K562 (cell line): ENCODE measurements at regions of chr2 and their contacts with region 1.

Region 1: DNA sequence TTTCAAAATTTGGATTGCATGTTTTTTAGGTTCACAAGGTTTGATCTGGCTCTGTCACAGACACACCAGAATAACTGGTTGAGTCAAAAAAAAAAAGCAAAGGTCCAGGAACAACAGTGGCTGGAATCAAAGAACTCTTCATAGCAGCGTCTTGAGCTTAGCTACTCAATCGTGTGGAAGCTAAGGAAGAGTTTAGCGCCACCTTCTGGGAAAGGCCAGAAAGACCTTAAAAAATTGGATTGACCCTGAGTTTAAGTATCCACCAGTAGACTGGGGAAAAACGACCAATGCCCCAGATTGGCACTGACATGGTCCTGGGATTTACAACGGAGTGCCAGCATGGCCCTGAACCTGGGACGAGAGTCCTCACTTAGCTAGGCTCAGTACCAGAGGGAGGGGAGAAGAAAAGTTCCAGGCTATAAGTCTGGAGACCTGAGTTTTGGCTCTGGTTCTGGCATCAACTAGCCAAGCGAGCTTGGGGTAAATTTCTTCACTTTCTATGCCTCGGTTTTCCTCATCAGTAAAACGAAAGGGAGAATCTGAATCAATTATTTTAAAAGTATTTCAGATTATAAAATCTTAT is 71.1 kb upstream of the TFCP2L1 start:
- DNase-seq: peak; percentile 46 to 69 (median 53)
- ATAC-seq: peak; percentile 95
- H3K4me3 ChIP-seq: no peak overlapping the region
- H3K27ac ChIP-seq: no peak overlapping the region
- H3K4me1 ChIP-seq: no peaks in the 10 kb centered on the region
- H3K27me3 ChIP-seq: no peaks in the 10 kb centered on the region
- CTCF ChIP-seq: peak; percentile 73 to 77 (median 75)
- EP300 ChIP-seq: no peak
- POLR2A ChIP-seq: no peak
- RAD21 ChIP-seq: peak; percentile 50 to 70

Region 2: GRCh38 chr2:121085801-121086200 is 270.3 kb before region 1 on chr2:
- CTCF ChIA-PET with region 1: interaction called, 3 read pairs
- POLR2A ChIA-PET with region 1: no interaction called
- in situ Hi-C with region 1: no loop called
- intact Hi-C with region 1: loop called (anchors 2 kb)
- DNase-seq: no peak
- ATAC-seq: no peak
- H3K4me3 ChIP-seq: no peak overlapping the region
- H3K27ac ChIP-seq: no peak overlapping the region
- H3K4me1 ChIP-seq: 0 out of 5 replicates have a peak, but pooled peaks cover 0 to 3% of the 10 kb centered on the region in 2 experiments
- H3K27me3 ChIP-seq: peaks cover 10 to 62% of the 10 kb centered on the region in 2 experiments; a peak in 4 of 5 replicates
- CTCF ChIP-seq: no peak
- EP300 ChIP-seq: no peak
- POLR2A ChIP-seq: no peak
- RAD21 ChIP-seq: no peak

Region 3: DNA sequence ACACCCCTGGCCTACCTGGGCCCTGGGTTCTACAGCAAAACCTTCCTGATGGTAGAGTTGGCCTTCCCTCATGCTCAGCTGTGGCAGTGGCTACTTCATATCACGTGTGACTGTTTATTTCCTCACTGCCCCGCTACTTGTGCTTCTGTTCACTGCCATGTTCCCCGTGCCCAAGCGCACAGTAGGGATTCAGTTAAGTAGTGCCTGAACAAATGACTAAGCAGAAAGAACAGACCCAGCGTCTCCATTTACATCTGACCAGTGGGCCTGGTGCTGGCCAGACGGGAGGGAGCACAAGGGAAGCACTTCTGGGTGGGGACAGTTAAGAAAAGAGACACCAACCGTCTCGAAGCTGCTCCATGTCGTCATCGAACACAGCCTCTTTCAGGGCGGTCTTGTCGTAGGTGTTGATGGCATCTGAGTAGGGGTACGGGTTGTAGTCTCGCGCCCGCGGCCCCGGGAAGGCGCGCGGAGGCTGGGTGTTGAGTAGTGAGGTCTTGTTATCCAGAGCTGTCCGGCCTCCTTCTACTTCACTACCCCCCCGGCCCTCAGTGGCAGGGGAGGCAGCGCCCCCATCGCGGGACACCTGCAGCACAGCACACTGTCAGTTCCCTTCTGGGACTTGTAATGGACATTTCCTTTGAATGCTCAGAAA is 11.2 kb after region 1 on chr2:
- CTCF ChIA-PET with region 1: no interaction called
- POLR2A ChIA-PET with region 1: interaction called, 12 read pairs
- in situ Hi-C with region 1: no loop called
- intact Hi-C with region 1: no loop called
- DNase-seq: no peak
- ATAC-seq: no peak
- H3K4me3 ChIP-seq: no peak overlapping the region
- H3K27ac ChIP-seq: no peak overlapping the region
- H3K4me1 ChIP-seq: no peaks in the 10 kb centered on the region; a peak in 2 of 5 replicates
- H3K27me3 ChIP-seq: no peaks in the 10 kb centered on the region
- CTCF ChIP-seq: no peak
- EP300 ChIP-seq: no peak
- POLR2A ChIP-seq: no peak
- RAD21 ChIP-seq: no peak

Region 4: DNA sequence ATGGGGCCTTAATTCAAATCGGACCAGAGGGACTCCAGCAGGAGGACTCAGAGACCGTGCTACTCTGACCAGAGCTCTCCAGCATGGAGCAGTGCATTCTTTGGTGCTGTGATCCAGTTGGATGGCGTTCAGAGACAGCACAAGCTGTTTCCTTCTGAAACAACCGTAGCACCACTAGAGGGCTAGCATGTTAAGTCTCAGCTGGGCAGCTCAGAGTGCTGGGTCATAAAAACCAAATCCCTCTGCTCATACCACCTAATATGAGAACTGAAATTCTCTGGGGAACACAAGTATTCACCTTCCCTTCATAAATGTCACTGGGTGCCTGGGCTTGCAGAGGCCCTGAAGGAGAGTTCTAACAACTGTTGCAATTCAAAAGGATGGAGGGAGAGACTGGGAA is 26.6 kb after region 1 on chr2:
- CTCF ChIA-PET with region 1: no interaction called
- POLR2A ChIA-PET with region 1: no interaction called
- in situ Hi-C with region 1: no loop called
- intact Hi-C with region 1: no loop called
- DNase-seq: no peak
- ATAC-seq: 0 out of 3 replicates have a peak, but pooled peaks have one; percentile 49
- H3K4me3 ChIP-seq: no peak overlapping the region
- H3K27ac ChIP-seq: no peak overlapping the region
- H3K4me1 ChIP-seq: no peaks in the 10 kb centered on the region
- H3K27me3 ChIP-seq: no peaks in the 10 kb centered on the region
- CTCF ChIP-seq: no peak
- EP300 ChIP-seq: no peak
- POLR2A ChIP-seq: no peak
- RAD21 ChIP-seq: no peak